PC-3 (cell line): ENCODE measurements at regions of chr11 and their contacts with region 1.

Region 1: GRCh38 chr11:73498343-73498742 is 99.6 kb downstream of the FAM168A start:
- DNase-seq: no peak
- ATAC-seq: no peak
- H3K4me3 ChIP-seq: no peak overlapping the region
- H3K27ac ChIP-seq: no peak overlapping the region
- H3K4me1 ChIP-seq: peaks cover 14% of the 10 kb centered on the region
- H3K27me3 ChIP-seq: no peaks in the 10 kb centered on the region
- CTCF ChIP-seq: no peak

Region 2: DNA sequence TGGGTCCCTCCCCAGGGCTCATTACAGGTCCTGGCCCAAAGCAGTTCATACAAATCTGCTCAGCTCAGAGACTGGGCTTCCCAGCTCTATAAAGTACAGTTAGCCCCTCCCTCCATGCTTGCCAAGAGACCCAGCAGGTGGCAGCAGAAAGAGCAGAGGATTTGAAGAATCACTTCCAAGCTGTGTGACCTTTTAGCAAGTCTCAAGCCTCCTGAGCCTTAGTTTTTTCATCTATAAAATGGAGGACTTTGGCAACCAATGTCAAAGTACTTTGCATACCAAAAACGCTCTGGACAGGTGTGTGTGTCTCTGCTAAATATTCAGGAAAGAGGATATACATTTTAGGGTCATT is 95.5 kb before region 1 on chr11:
- CTCF ChIA-PET with region 1: no interaction called
- POLR2A ChIA-PET with region 1: interaction called, 13 read pairs
- intact Hi-C with region 1: no loop called
- DNase-seq: peak; percentile 56
- ATAC-seq: peak; percentile 70
- H3K4me3 ChIP-seq: no peak overlapping the region
- H3K27ac ChIP-seq: no peak overlapping the region
- H3K4me1 ChIP-seq: no peaks in the 10 kb centered on the region
- H3K27me3 ChIP-seq: no peaks in the 10 kb centered on the region
- CTCF ChIP-seq: peak; percentile 68

Region 3: DNA sequence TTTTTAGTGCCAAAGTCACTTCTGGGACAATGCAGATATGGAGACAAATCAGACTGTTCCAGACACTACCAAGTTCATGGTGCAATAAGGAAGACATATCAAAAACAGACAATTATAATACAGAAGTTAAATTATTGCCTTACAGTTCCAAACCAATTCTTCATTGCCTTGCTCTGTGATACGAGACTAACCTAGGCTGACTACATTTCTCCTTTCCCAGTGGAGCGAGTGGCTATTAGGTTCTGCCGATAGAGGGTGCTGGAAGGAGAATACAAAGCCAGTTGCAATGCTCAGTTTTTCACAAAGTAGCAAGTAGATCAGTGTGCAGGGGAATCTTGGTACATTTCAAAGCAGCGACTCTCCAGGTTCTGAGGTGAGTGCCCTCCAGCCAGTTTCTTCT is 31.8 kb after region 1 on chr11:
- CTCF ChIA-PET with region 1: no interaction called
- POLR2A ChIA-PET with region 1: no interaction called
- intact Hi-C with region 1: no loop called
- DNase-seq: no peak
- ATAC-seq: no peak
- H3K4me3 ChIP-seq: no peak overlapping the region
- H3K27ac ChIP-seq: no peak overlapping the region
- H3K4me1 ChIP-seq: no peaks in the 10 kb centered on the region
- H3K27me3 ChIP-seq: no peaks in the 10 kb centered on the region
- CTCF ChIP-seq: no peak